Ovary (tissue), 10 donors: ENCODE measurements at regions of chr15 and their contacts with region 1.

Region 1: GRCh38 chr15:65384895-65385858 is 7.4 kb upstream of the IGDCC3 start:
- DNase-seq: peak; percentile 86 to 93 (median 89)
- H3K4me3 ChIP-seq: peak overlapping the region; percentile 13
- H3K27ac ChIP-seq: peak overlapping the region; percentile 55 to 86
- H3K4me1 ChIP-seq: peaks cover 15% of the 10 kb centered on the region
- H3K27me3 ChIP-seq: no peaks in the 10 kb centered on the region
- CTCF ChIP-seq: peak; percentile 85 to 93 (median 89)
- EP300 ChIP-seq: no peak
- POLR2A ChIP-seq: no peak

Region 2: DNA sequence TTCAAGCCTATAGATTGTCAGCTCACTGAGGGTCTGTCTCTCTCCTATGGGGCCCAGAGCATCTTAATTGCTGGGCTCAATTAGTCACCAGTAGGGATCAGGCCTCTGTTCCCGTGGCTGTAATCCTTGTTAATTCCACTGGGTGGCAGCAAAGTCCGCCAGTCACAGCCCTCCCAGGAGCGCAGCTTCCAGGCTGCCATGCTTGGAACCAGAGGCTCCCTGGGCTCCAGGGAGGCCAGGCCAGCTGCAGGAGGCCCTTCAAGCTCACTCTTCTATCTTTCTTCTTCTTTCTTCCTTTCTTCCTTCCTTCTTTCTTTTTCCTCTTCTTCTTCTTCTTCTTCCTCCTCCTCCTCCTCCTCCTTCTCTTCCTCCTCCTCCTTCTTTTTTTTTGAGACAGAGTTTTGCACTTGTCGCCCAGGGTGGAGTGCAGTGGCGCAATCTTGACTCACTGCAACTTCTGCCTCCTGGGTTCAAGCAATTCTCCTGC is 66.3 kb before region 1 on chr15:
- intact Hi-C with region 1: loop called (anchors 2 to 5 kb)
- DNase-seq: peak; percentile 71 to 86 (median 85)
- H3K4me3 ChIP-seq: no peak overlapping the region
- H3K27ac ChIP-seq: no peak overlapping the region
- H3K4me1 ChIP-seq: peaks cover 3% of the 10 kb centered on the region
- H3K27me3 ChIP-seq: no peaks in the 10 kb centered on the region
- CTCF ChIP-seq: peak; percentile 88 to 92 (median 91)
- EP300 ChIP-seq: no peak
- POLR2A ChIP-seq: no peak